ENCODE measurements at regions of chr12 and their contacts with region 1.

Region 1: DNA sequence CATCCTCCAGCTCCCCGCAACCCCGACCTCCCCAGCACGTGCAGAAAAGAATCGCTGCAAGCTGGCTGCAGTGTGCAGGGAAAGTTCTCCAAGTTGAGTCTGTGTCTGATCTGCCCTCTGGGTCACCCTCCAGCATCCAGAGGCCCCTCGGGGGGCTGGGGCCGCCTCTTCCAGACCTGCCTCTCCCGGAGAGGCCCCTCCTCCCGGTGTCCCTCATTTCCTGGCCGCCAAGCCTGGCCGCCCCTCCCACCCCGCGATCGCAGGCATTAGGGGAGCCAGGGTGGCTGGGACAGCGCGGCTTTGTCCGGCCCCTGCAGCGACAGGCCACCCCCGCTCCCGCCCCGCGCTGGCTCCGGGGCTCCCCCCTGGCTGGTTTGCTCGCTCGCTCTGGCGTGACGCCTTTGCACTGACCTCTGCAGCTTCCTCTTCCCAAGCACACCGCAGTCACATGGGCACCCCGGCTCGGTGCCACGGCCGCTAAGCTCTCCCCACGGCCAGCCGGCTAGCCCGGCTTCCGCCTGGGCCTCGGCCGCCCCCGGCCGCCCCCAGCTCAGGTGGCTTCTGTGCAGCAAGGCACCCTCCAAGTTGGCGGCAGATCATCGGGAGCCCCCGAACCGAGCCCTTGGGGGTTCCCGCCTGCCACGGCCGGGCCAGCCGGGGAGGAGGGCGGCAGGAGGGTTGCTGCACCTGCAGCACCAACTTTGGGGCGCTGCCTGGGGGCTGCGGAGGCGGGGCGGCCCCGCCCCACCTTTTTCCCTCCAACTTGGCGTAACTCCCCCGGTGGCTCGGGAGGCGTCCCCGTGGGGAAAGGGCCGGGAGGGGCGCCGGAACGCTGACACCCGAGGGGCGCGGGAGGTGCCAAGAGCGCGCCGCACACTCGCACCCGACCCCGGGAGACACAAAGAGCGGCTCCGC is 43.7 kb downstream of the KDM2B start:
- DNase-seq: peak; percentile 45
- H3K4me3 ChIP-seq: peak overlapping the region; percentile 57
- H3K27ac ChIP-seq: peak overlapping the region; percentile 50
- H3K4me1 ChIP-seq: peaks cover 13% of the 10 kb centered on the region
- H3K27me3 ChIP-seq: no peaks in the 10 kb centered on the region
- CTCF ChIP-seq: no peak

Region 2: GRCh38 chr12:120481022-120481767 is 1056.0 kb before region 1 on chr12:
- CTCF ChIA-PET with region 1: no interaction called
- POLR2A ChIA-PET with region 1: interaction called, 11 read pairs
- intact Hi-C with region 1: no loop called
- DNase-seq: no peak
- H3K4me3 ChIP-seq: no peak overlapping the region
- H3K27ac ChIP-seq: no peak overlapping the region
- H3K4me1 ChIP-seq: no peaks in the 10 kb centered on the region
- H3K27me3 ChIP-seq: no peaks in the 10 kb centered on the region
- CTCF ChIP-seq: no peak

Region 3: GRCh38 chr12:123337070-123337469 is 1799.9 kb after region 1 on chr12:
- CTCF ChIA-PET with region 1: no interaction called
- POLR2A ChIA-PET with region 1: interaction called, 13 read pairs
- intact Hi-C with region 1: no loop called
- DNase-seq: no peak
- H3K4me3 ChIP-seq: no peak overlapping the region
- H3K27ac ChIP-seq: no peak overlapping the region
- H3K4me1 ChIP-seq: no peaks in the 10 kb centered on the region
- H3K27me3 ChIP-seq: no peaks in the 10 kb centered on the region
- CTCF ChIP-seq: no peak